Activated B cell treated with CpG ODN at 0.5 μM for 24 hours (primary cell): ENCODE measurements at regions of chr19 and their contacts with region 1.

Region 1: DNA sequence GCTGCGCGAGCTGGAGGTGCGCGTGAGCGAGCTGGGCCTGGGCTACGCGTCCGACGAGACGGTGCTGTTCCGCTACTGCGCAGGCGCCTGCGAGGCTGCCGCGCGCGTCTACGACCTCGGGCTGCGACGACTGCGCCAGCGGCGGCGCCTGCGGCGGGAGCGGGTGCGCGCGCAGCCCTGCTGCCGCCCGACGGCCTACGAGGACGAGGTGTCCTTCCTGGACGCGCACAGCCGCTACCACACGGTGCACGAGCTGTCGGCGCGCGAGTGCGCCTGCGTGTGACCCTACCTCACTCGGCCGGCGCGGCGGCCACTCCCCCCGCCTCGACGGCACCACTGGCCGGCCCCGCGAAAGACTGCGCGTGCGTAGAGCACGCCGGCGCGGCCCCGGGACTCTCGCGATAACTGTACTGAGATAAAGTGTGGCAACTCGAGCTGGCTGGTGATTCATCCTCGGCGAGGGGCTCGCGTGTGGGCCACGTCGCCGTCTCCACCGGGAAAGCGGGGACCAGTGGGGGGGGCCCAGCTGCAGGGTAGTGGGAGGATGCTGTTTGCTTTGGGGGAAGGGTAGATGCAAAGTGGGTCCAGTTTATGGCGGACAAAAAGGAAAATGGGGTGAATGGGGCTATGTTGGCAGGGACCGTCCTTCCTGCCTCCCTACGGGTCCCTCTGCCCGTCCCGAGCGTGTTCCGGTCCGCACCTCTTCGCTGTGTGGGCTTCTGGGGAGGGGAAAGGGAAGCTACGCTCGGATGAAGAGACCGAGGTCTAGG is 11.4 kb downstream of the FUT6 start:
- DNase-seq: peak; percentile 78
- ATAC-seq: peak; percentile 78
- H3K4me3 Mint-ChIP-seq: peak overlapping the region; percentile 85
- H3K27ac Mint-ChIP-seq: peak overlapping the region; percentile 75
- H3K4me1 Mint-ChIP-seq: peaks cover 18% of the 10 kb centered on the region
- H3K27me3 Mint-ChIP-seq: peaks cover 11% of the 10 kb centered on the region
- CTCF ChIP-seq: no peak

Region 2: DNA sequence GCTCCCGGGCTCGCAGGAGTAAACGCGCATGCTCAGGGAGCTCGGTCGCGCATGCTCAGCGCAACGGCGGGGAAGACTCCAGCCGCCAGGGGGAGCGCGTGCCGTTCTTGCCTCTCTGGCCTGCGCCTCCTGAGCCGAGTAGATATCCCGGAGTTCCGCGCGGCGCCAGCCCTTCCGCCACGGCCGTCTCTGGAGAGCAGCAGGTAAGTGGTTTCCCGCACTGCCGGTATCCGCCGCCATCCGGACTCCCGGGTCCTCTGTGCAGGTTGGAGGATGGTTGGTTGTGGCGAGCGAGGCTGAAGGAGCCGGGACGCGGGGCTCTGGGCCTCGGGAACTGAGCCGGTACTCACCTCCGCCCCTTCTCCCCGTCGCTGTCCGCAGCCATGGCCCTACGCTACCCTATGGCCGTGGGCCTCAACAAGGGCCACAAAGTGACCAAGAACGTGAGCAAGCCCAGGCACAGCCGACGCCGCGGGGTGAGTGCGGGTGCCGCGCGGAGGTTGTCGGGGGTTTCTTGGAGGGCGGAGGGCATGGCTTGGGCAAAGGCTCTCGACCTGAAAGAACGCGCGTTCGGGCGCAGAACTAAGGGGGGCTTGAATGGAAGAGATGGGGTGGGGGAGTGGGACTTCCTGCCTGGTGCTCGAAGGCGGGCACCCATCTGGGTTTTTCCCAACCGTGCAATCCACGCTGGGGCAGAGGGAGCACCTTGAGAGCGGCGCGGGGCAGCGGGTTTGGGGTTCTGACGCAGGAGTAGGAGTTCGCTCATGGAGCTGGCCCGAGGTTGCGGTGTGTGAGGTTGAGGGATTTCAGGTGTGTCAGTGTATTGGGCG is 137.7 kb before region 1 on chr19 and contains the start of gene RPL36:
- CTCF ChIA-PET with region 1: no interaction called
- POLR2A ChIA-PET with region 1: no interaction called
- intact Hi-C with region 1: loop called (anchors 2 kb)
- DNase-seq: peak; percentile 99
- ATAC-seq: peak; percentile 48
- H3K4me3 Mint-ChIP-seq: peak within 1 kb of the TSS; percentile 93
- H3K27ac Mint-ChIP-seq: peak within 1 kb of the TSS; percentile 90
- H3K4me1 Mint-ChIP-seq: peaks cover 33% of the 10 kb centered on the region
- H3K27me3 Mint-ChIP-seq: no peaks in the 10 kb centered on the region
- CTCF ChIP-seq: peak; percentile 88
- total RNA-seq, gene RPL36: 1,170 and 1,330 TPM in 2 replicates

Region 3: DNA sequence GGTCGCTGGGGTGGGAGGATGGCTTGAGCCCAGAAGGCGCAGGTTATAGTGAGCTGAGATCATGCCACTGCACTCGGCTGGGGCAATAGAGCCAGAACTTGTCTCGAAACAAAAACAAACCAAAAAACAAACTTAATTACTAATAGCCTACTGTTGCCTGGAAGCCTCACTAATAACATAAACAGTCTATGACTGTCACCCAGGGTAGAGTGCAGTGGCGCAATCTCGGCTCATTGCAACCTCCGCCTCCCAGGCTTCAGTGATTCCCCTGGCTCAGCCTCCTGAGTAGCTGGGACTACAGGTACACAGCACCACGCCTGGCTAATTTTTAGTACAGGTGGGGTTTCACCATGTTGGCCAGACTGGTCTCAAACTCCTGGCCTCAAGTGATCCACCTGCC is 89.7 kb before region 1 on chr19:
- CTCF ChIA-PET with region 1: no interaction called
- POLR2A ChIA-PET with region 1: no interaction called
- intact Hi-C with region 1: no loop called
- DNase-seq: no peak
- ATAC-seq: no peak
- H3K4me3 Mint-ChIP-seq: no peak overlapping the region
- H3K27ac Mint-ChIP-seq: no peak overlapping the region
- H3K4me1 Mint-ChIP-seq: no peaks in the 10 kb centered on the region
- H3K27me3 Mint-ChIP-seq: peaks cover 4% of the 10 kb centered on the region
- CTCF ChIP-seq: no peak